ENCODE measurements at regions of chr5 and their contacts with region 1.

Region 1: DNA sequence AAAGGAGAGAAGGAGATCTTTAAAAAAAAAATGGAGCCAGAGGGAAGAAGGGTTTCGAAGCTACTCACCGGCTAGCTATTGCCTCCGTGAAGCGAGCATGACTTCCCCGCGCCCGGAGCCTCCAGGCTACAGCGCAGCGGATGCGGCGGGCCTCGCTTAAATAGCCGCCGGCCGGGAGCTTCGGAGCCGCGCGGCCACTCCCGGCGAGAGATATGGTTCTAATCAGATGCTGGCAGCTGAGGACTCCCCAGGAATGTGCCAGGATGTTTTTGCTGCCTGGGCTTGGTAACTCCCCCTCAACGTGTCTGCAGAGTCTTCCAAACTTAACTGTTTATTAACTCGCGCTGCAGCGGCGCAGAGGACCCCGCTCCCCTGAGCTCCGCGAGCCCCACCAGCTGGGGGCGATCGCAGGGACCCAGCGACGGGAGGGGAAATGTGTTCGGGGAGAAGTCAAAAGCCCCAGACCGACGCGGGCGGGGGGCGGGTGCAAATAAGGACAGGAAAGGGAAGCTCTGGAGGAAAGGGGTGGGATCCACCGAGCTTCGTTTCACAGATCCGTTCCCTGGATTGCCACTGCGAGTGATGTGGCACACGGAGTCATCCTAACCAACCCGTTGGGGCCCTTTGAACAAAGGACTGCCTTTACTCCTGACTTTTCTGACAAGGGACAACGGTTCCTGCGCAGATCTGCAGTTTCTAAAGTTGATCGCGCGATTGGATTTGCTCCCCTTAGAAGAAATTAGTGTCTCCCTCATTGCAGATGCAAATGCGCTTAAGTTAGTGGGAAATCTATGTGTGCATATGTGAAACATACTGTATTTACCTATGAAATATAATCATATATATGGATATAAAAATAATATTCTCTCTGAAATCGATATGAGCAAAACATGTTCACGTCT is at the start of gene DAB2:
- DNase-seq: peak; percentile 79
- ATAC-seq: peak; percentile 91
- H3K4me3 ChIP-seq: peak within 1 kb of the TSS; percentile 62 to 80 (median 73)
- H3K27ac ChIP-seq: peak within 1 kb of the TSS; percentile 52
- H3K4me1 ChIP-seq: peaks cover 65% of the 10 kb centered on the region
- H3K27me3 ChIP-seq: no peaks in the 10 kb centered on the region; a peak in 1 of 5 replicates
- CTCF ChIP-seq: peak; percentile 84
- EP300 ChIP-seq: no peak
- POLR2A ChIP-seq: peak in 1 of 2 experiments; percentile 71; a peak in 1 of 4 replicates
- RAD21 ChIP-seq: no peak; the same call in none of the 2 replicates
- total RNA-seq, gene DAB2: 5.2 and 6.5 TPM in 2 replicates

Region 2: GRCh38 chr5:38793099-38793498 is 631.9 kb before region 1 on chr5:
- CTCF ChIA-PET with region 1: no interaction called
- POLR2A ChIA-PET with region 1: no interaction called
- in situ Hi-C with region 1: no loop called
- intact Hi-C with region 1: no loop called
- DNase-seq: no peak
- ATAC-seq: no peak
- H3K4me3 ChIP-seq: no peak overlapping the region
- H3K27ac ChIP-seq: no peak overlapping the region
- H3K4me1 ChIP-seq: no peaks in the 10 kb centered on the region
- H3K27me3 ChIP-seq: peaks cover 0 to 11% of the 10 kb centered on the region in 2 experiments; a peak in 1 of 5 replicates
- CTCF ChIP-seq: no peak
- EP300 ChIP-seq: no peak
- POLR2A ChIP-seq: no peak
- RAD21 ChIP-seq: no peak

Region 3: DNA sequence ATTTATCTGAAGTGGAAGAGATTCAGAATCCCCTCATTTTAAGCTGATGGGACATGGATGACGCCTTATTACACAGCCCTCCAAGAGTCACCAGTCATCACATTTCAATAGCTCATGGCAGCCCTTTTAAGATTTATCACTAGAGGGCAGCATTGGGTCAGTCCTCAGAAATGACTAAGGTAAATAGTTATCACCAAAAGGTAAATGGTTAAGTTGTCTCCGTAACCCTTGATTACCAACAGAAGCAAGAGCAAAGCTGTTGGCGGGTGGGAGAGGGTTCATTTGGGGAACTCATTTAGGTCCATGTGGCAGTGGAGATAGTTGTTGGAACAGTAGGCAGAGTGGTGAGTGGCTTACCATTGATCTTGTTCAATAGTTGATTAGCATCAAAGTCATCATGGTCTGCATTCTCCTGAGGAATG is 48.7 kb before region 1 on chr5:
- CTCF ChIA-PET with region 1: no interaction called
- POLR2A ChIA-PET with region 1: no interaction called
- in situ Hi-C with region 1: no loop called
- intact Hi-C with region 1: loop called (anchors 1 kb)
- DNase-seq: peak; percentile 57
- ATAC-seq: peak; percentile 95
- H3K4me3 ChIP-seq: no peak overlapping the region
- H3K27ac ChIP-seq: no peak overlapping the region
- H3K4me1 ChIP-seq: no peaks in the 10 kb centered on the region
- H3K27me3 ChIP-seq: no peaks in the 10 kb centered on the region
- CTCF ChIP-seq: peak; percentile 85
- EP300 ChIP-seq: no peak
- POLR2A ChIP-seq: no peak
- RAD21 ChIP-seq: peak; percentile 76

Region 4: DNA sequence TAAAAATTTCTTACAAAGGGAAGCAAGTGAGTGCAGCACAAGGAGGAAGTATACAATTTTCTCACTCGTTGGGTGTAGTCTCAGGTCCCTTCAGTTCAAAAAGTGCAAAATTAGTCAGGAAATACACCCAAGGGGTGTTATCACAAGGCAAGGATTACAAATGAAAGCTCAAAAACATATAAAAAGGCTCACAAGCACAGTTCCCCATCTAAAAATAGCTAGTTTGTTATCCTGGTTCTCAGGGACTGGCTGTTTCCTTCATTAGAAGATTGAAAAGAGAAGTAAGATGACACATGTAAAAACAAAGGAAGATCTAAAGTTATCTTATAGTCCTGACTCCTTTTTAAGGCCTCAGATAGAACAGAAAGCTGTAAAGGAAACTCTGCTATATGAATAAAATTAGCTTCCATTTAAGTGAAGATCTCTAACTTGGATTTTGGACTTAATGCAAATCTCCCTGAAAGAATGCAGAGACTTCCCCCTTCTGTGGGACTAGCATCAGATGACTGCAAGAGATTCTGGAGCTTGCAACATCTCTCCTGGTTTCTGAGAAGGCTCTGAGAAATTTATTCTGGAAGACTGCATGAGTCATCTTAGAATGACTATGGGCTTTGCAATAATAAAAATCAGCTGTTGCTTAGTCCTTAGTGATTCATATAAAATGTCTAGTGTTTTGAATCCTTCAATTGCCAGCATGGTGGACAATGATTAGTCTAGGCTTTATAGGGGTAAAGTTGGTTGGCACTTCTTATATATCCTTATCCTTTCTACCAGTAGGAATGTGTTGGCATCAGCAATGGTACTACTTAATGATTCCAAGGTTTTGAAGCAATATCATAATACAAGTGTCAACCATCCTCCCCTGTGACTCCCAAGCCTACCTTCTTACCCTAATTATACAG is 25.6 kb before region 1 on chr5:
- CTCF ChIA-PET with region 1: no interaction called
- POLR2A ChIA-PET with region 1: interaction called, 33 read pairs
- in situ Hi-C with region 1: no loop called
- intact Hi-C with region 1: no loop called
- DNase-seq: peak; percentile 30
- ATAC-seq: peak; percentile 28; the same call in 2 of the 3 replicates
- H3K4me3 ChIP-seq: no peak overlapping the region
- H3K27ac ChIP-seq: no peak overlapping the region
- H3K4me1 ChIP-seq: peaks cover 58% of the 10 kb centered on the region
- H3K27me3 ChIP-seq: no peaks in the 10 kb centered on the region; a peak in 1 of 5 replicates
- CTCF ChIP-seq: no peak
- EP300 ChIP-seq: no peak
- POLR2A ChIP-seq: no peak
- RAD21 ChIP-seq: no peak

Region 5: DNA sequence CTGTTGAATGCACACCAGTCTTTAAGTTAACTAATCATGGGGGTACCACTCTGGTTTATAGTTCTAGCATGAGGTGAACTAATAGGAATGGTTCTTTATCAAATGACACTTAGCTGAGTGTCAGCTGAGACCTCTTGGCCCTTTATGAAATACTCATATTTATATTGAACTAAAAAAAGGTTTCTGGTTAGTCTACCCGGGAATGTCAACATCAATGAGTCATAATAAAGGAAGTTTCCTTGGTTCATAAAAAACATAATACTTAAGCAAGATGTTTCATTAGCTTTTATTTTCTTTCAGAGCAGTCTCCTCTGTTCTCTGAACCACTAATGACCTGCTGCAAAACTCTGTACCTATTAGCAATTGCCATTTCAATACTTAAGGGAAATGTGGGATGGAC is 13.9 kb before region 1 on chr5:
- CTCF ChIA-PET with region 1: no interaction called
- POLR2A ChIA-PET with region 1: interaction called, 22 read pairs
- in situ Hi-C with region 1: no loop called
- intact Hi-C with region 1: loop called (anchors 1 kb)
- DNase-seq: no peak
- ATAC-seq: no peak
- H3K4me3 ChIP-seq: no peak overlapping the region
- H3K27ac ChIP-seq: no peak overlapping the region
- H3K4me1 ChIP-seq: peaks cover 58% of the 10 kb centered on the region
- H3K27me3 ChIP-seq: no peaks in the 10 kb centered on the region
- CTCF ChIP-seq: no peak
- EP300 ChIP-seq: no peak
- POLR2A ChIP-seq: no peak
- RAD21 ChIP-seq: no peak

Region 6: GRCh38 chr5:39437469-39437868 is 12.5 kb after region 1 on chr5:
- CTCF ChIA-PET with region 1: no interaction called
- POLR2A ChIA-PET with region 1: interaction called, 16 read pairs
- in situ Hi-C with region 1: no loop called
- intact Hi-C with region 1: loop called (anchors 1 kb)
- DNase-seq: peak; percentile 90
- ATAC-seq: peak; percentile 100
- H3K4me3 ChIP-seq: no peak overlapping the region
- H3K27ac ChIP-seq: no peak overlapping the region
- H3K4me1 ChIP-seq: peaks cover 18% of the 10 kb centered on the region
- H3K27me3 ChIP-seq: peaks cover 1 to 16% of the 10 kb centered on the region in 2 experiments; a peak in 3 of 5 replicates
- CTCF ChIP-seq: no peak
- EP300 ChIP-seq: peak in 1 of 2 experiments; percentile 77; a peak in 2 of 4 replicates
- POLR2A ChIP-seq: no peak
- RAD21 ChIP-seq: no peak

Region 7: GRCh38 chr5:39547553-39548154 is 122.7 kb after region 1 on chr5:
- CTCF ChIA-PET with region 1: interaction called, 5 read pairs
- POLR2A ChIA-PET with region 1: interaction called, 5 read pairs
- in situ Hi-C with region 1: no loop called
- intact Hi-C with region 1: loop called (anchors 2 kb)
- DNase-seq: peak; percentile 41
- ATAC-seq: peak; percentile 74
- H3K4me3 ChIP-seq: no peak overlapping the region
- H3K27ac ChIP-seq: no peak overlapping the region
- H3K4me1 ChIP-seq: no peaks in the 10 kb centered on the region
- H3K27me3 ChIP-seq: peaks cover 0 to 8% of the 10 kb centered on the region in 2 experiments; a peak in 1 of 5 replicates
- CTCF ChIP-seq: peak; percentile 72
- EP300 ChIP-seq: no peak
- POLR2A ChIP-seq: no peak
- RAD21 ChIP-seq: peak; percentile 67

Measured in HepG2 (cell line).